Naive thymus-derived CD4-positive, alpha-beta T cell (primary cell): ENCODE measurements at regions of chr2 and their contacts with region 1.

Region 1: DNA sequence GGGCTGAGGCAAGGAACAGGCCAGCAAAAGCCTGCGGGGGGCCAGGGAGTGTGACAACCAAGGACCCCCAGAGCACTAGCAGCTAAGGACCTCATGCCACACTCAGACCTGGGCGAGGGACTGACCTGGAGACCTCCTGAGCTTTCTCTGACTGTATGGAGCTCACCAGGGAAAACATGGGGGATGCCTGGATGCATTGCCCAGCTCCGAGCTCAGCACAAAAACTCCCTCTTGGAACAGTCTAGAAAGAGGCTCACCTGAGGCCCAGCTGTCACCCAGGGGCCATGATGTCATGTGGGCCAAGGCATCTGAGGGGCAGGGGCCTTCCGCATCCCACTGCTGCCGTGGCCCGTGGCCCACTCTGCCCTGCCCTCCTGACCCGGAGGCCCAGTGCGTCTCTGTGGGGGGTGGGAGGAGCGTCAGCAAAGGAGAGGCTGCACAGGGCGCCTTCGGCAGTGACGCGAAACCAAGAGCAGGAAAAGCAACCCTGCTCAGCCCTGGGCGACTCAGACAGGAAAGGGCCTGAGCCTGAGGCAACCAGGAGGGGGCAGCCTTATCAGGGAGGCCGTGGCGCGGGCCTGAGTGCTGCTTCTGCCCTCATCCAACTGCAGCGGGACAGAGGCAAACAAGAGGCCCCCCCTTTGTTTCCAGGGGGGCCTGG is 57.3 kb upstream of the ALPP start:
- DNase-seq: peak in 6 of 9 donors; percentile 39 to 60 (median 49)
- ATAC-seq: peak; percentile 52
- H3K4me3 ChIP-seq: no peak overlapping the region
- H3K4me3 Mint-ChIP-seq: peak overlapping the region in 9 of 10 donors; percentile 23 to 78 (median 41)
- H3K27ac ChIP-seq: peak overlapping the region; percentile 69
- H3K27ac Mint-ChIP-seq: peak overlapping the region; percentile 84 to 96 (median 91)
- H3K4me1 ChIP-seq: peaks cover 38 to 67% of the 10 kb centered on the region in 2 donors
- H3K4me1 Mint-ChIP-seq: peaks cover 45 to 75% (median 65%) of the 10 kb centered on the region in 7 donors
- H3K27me3 ChIP-seq: no peaks in the 10 kb centered on the region
- H3K27me3 Mint-ChIP-seq: no peaks in the 10 kb centered on the region

Region 2: GRCh38 chr2:232286001-232286868 is 35.1 kb before region 1 on chr2:
- CTCF ChIA-PET with region 1: interaction called, 10 read pairs
- POLR2A ChIA-PET with region 1: no interaction called
- intact Hi-C with region 1: loop called in 1 of 2 experiments (anchors 5 kb)
- DNase-seq: peak in 3 of 9 donors; percentile 15 to 27 (median 17)
- ATAC-seq: peak; percentile 3
- H3K4me3 ChIP-seq: no peak overlapping the region
- H3K4me3 Mint-ChIP-seq: peak overlapping the region in 7 of 10 donors; percentile 0 to 49 (median 21)
- H3K27ac ChIP-seq: peak overlapping the region; percentile 40
- H3K27ac Mint-ChIP-seq: peak overlapping the region in 8 of 9 donors; percentile 81 to 94 (median 89)
- H3K4me1 ChIP-seq: peaks cover 0 to 28% of the 10 kb centered on the region in 2 donors
- H3K4me1 Mint-ChIP-seq: peaks cover 9 to 54% (median 48%) of the 10 kb centered on the region in 7 donors
- H3K27me3 ChIP-seq: no peaks in the 10 kb centered on the region
- H3K27me3 Mint-ChIP-seq: no peaks in the 10 kb centered on the region